HepG2 (cell line): ENCODE measurements at regions of chr5 and their contacts with region 1.

Region 1: DNA sequence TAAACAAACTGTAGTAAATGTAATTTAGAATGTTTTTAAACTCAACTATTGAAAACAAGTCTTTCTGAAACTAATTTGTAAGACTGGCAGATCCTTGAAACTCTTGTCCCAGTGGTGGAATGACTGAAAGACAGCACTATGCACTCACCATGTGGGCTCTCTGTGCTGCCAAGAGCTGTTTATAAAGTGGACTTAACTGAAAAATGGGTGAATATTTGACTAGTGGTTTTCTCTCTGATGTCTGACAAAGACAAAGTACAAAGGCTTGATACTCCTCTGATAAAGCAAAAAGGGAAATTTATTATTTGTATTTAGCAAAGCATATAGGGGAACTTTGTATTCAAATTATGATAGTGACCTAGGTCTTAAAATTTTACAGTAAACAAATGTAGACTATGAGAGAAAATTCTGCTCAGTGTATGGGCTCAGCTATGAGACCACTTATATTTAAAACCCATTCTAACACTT is 635.4 kb downstream of the NR2F1-AS1 start:
- DNase-seq: peak; percentile 95
- ATAC-seq: peak; percentile 97
- H3K4me3 ChIP-seq: 0 out of 6 replicates have a peak overlapping the region, but pooled peaks of 1 of the 3 experiments have one; percentile 1
- H3K27ac ChIP-seq: peak overlapping the region; percentile 91
- H3K4me1 ChIP-seq: peaks cover 70% of the 10 kb centered on the region
- H3K27me3 ChIP-seq: no peaks in the 10 kb centered on the region
- CTCF ChIP-seq: no peak
- EP300 ChIP-seq: peak in 1 of 2 experiments; percentile 92; a peak in 2 of 4 replicates
- POLR2A ChIP-seq: peak in 1 of 2 experiments; percentile 61; a peak in 3 of 4 replicates
- RAD21 ChIP-seq: no peak

Region 2: DNA sequence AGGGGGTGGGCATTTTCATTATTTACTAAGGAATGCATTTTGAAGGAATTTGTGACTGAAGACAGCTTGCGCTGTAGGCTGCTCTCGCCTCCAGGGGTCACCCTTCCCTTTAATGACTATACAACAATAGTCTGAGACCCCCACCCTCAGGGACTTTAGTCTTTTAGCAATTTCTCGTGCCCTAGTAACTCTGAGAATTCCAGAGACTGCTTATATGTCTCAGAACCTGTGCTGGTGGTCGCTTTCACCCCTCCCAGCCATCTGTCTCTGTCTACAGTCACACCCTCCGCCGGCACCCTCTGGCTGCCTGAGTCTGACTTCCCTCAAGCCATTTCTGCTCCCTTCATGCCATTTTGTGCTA is 36.1 kb before region 1 on chr5:
- CTCF ChIA-PET with region 1: no interaction called
- POLR2A ChIA-PET with region 1: interaction called, 19 read pairs
- in situ Hi-C with region 1: no loop called
- intact Hi-C with region 1: loop called (anchors 1 kb)
- DNase-seq: peak; percentile 41
- ATAC-seq: peak; percentile 79
- H3K4me3 ChIP-seq: no peak overlapping the region
- H3K27ac ChIP-seq: peak overlapping the region; percentile 39
- H3K4me1 ChIP-seq: peaks cover 72% of the 10 kb centered on the region
- H3K27me3 ChIP-seq: no peaks in the 10 kb centered on the region
- CTCF ChIP-seq: peak; percentile 64
- EP300 ChIP-seq: 0 out of 4 replicates have a peak, but pooled peaks of 1 of the 2 experiments have one; percentile 12
- POLR2A ChIP-seq: no peak
- RAD21 ChIP-seq: peak; percentile 77

Region 3: GRCh38 chr5:92927291-92927778 is 18.3 kb before region 1 on chr5:
- CTCF ChIA-PET with region 1: no interaction called
- POLR2A ChIA-PET with region 1: interaction called, 20 read pairs
- in situ Hi-C with region 1: no loop called
- intact Hi-C with region 1: loop called (anchors 2 kb)
- DNase-seq: peak; percentile 96
- ATAC-seq: peak; percentile 94
- H3K4me3 ChIP-seq: no peak overlapping the region
- H3K27ac ChIP-seq: peak overlapping the region; percentile 76
- H3K4me1 ChIP-seq: peaks cover 79% of the 10 kb centered on the region
- H3K27me3 ChIP-seq: no peaks in the 10 kb centered on the region
- CTCF ChIP-seq: no peak
- EP300 ChIP-seq: peak; percentile 90 to 96
- POLR2A ChIP-seq: no peak
- RAD21 ChIP-seq: no peak; the same call in 1 of the 2 replicates

Region 4: GRCh38 chr5:92969781-92970237 is 24.1 kb after region 1 on chr5:
- CTCF ChIA-PET with region 1: no interaction called
- POLR2A ChIA-PET with region 1: interaction called, 34 read pairs
- in situ Hi-C with region 1: no loop called
- intact Hi-C with region 1: loop called (anchors 2 kb)
- DNase-seq: peak; percentile 98
- ATAC-seq: peak; percentile 99
- H3K4me3 ChIP-seq: no peak overlapping the region
- H3K27ac ChIP-seq: peak overlapping the region; percentile 87
- H3K4me1 ChIP-seq: peaks cover 59% of the 10 kb centered on the region
- H3K27me3 ChIP-seq: no peaks in the 10 kb centered on the region
- CTCF ChIP-seq: no peak
- EP300 ChIP-seq: peak; percentile 74 to 99
- POLR2A ChIP-seq: 0 out of 4 replicates have a peak, but pooled peaks of 1 of the 2 experiments have one; percentile 22
- RAD21 ChIP-seq: no peak

Region 5: DNA sequence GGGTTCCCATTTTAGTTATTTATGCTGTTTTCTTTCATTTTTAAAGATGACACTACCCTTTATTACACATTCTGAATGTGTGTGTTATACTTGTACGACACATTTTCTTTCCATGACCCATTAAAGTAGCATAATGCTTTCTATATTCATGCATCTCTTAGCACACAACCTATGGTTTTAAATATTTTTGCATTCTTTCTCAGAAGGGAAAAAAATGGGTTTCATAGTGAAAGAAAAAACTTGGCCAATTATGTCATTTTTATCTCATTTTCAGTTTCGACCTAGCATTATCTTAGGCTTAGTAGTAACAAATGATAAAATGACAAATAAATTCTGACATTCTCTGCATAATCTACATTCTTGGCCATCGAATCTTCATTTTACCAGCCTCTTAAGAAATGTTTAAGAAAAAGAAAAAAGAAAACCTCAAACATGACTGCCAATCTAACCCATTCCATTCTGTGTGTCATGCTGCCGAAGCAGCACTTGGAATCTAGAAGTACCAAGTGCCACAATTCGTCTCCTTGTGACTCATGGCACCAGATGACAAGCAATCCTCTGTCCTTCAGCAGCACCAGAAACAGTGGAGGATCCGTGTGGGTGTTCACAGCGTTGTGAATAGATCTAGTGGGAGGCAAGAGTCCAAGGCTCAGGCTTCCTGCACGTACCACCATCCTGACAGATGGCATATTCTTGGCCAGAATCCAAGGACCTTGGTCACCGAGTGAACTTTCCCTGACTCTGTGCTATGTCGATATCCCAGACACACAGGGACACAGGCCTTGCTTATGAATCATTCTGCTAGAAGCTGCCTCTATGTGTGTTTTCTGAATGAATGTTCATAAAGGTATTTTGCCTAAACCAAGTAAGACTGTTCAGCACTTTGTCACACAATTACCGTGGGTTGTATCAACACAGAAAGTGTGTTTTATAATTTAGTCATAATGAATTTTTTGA is 132.7 kb after region 1 on chr5:
- CTCF ChIA-PET with region 1: no interaction called
- POLR2A ChIA-PET with region 1: no interaction called
- in situ Hi-C with region 1: no loop called
- intact Hi-C with region 1: loop called (anchors 1 kb)
- DNase-seq: peak; percentile 98
- ATAC-seq: peak; percentile 99
- H3K4me3 ChIP-seq: peak overlapping the region in 1 of 3 experiments; percentile 13; a peak in 1 of 6 replicates
- H3K27ac ChIP-seq: peak overlapping the region; percentile 76
- H3K4me1 ChIP-seq: peaks cover 37% of the 10 kb centered on the region
- H3K27me3 ChIP-seq: no peaks in the 10 kb centered on the region
- CTCF ChIP-seq: peak; percentile 28; the same call in 1 of the 2 replicates
- EP300 ChIP-seq: peak; percentile 68 to 85; a peak in 2 of 4 replicates
- POLR2A ChIP-seq: peak in 1 of 2 experiments; percentile 60; a peak in 2 of 4 replicates
- RAD21 ChIP-seq: no peak; the same call in 1 of the 2 replicates

Region 6: GRCh38 chr5:93246090-93246855 is 300.6 kb after region 1 on chr5:
- CTCF ChIA-PET with region 1: no interaction called
- POLR2A ChIA-PET with region 1: interaction called, 3 read pairs
- in situ Hi-C with region 1: loop called (anchors 10 kb)
- intact Hi-C with region 1: loop called (anchors 10 kb)
- DNase-seq: peak; percentile 100
- ATAC-seq: peak; percentile 100
- H3K4me3 ChIP-seq: peak overlapping the region in 1 of 3 experiments; percentile 32; a peak in 1 of 6 replicates
- H3K27ac ChIP-seq: peak overlapping the region; percentile 88
- H3K4me1 ChIP-seq: peaks cover 72% of the 10 kb centered on the region
- H3K27me3 ChIP-seq: no peaks in the 10 kb centered on the region
- CTCF ChIP-seq: no peak
- EP300 ChIP-seq: peak; percentile 86 to 99
- POLR2A ChIP-seq: no peak
- RAD21 ChIP-seq: peak; percentile 18; the same call in 1 of the 2 replicates